Dorsolateral prefrontal cortex (tissue), 120 donors: ENCODE measurements at regions of chr1 and their contacts with region 1.

Region 1: DNA sequence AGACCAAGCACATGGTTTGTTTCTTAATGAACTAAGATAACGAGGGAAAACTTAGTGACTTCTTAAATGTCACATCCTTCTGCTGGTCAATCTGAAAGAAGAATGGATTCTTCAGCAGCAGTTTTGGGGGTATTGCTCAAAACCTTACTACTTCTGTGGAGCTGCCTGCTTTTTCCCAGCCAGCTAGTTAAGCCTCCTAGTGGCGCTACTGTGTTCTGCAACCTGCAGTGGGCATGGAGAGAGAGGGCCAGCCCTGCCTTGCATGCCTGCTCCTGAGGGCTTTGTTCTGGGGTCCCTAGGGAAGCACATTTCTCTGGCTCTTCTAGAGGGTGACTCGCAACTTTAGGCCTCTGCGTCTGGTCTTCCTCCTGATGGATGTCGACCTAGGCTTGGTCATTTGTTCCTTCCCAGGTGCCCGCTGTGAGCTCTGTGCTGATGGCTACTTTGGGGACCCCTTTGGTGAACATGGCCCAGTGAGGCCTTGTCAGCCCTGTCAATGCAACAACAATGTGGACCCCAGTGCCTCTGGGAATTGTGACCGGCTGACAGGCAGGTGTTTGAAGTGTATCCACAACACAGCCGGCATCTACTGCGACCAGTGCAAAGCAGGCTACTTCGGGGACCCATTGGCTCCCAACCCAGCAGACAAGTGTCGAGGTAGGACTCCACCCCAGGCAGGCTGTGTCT is 42.0 kb downstream of the LAMC2 start:
- DNase-seq: no peak
- H3K4me3 ChIP-seq: no peak overlapping the region
- H3K27ac ChIP-seq: no peak overlapping the region
- H3K27me3 ChIP-seq: no peaks in the 10 kb centered on the region
- CTCF ChIP-seq: peak in 52 of 56 donors; percentile 32 to 66 (median 50)

Region 2: DNA sequence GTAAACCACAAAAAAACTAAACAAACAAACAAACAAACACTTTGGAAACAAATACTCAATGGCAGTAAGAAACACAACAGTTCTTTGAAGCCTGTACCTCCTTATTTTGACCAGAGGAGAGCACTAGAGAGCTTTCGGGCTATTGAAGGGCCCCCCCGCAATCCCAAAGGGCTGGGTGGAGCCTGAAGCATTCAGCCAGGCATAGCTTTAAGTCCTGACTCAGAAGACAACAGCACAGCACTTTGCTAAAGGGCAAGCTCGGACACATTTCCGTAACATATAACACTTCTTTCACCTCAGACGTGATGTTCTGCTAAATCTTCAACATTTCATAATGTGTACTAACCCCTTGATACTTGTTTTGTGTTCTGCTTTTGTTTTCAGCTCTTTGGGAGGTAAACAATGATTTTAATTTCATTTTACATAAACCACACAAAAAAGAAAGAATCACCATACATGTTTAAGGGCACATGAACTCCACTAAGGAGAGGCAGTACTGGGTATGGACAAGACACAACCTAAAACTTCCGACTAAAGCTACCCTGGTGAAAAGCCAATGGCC is 265.5 kb before region 1 on chr1:
- intact Hi-C with region 1: loop called in 1 of 2 experiments (anchors 5 kb)
- DNase-seq: peak in 7 of 10 donors; percentile 34 to 67 (median 61)
- H3K4me3 ChIP-seq: peak overlapping the region in 29 of 59 donors; percentile 3 to 45 (median 17)
- H3K27ac ChIP-seq: peak overlapping the region in 1 of 59 donors; percentile 5
- H3K27me3 ChIP-seq: no peaks in the 10 kb centered on the region
- CTCF ChIP-seq: peak in 55 of 56 donors; percentile 42 to 94 (median 84)

Region 3: DNA sequence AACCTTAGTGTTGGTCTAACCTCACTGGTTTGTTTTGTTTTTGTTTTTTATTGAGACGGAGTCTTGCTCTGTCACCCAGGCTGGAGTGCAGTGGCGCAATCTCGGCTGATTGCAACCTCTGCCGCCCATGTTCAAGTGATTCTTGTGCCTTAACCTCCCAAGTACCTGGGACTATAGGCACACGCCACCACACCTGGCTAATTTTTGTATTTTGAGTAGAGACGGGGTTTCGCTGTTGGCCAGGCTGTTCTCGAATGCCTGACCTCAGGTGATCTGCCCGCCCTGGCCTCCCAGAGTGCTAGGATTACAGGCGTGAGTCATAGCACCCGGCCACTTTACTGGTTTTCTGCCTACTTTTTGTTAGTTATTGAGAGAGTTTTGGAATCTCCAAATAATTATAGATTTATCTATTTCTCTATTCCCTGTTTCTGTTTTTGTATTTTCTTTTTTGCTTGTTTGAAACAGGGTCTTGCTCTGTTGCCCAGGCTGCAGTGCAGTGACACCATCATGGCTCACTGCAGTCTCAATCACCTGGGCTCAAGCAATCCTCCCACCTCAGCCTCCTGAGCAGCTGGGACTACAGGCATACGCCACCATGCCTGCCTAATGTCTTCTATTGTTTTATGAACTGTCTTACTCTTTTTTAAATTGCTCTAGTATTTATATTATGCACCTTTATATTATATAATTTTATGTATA is 265.6 kb after region 1 on chr1:
- intact Hi-C with region 1: no loop called
- DNase-seq: no peak
- H3K4me3 ChIP-seq: no peak overlapping the region
- H3K27ac ChIP-seq: no peak overlapping the region
- H3K27me3 ChIP-seq: no peaks in the 10 kb centered on the region
- CTCF ChIP-seq: no peak

Region 4: GRCh38 chr1:183593356-183593755 is 365.2 kb after region 1 on chr1:
- intact Hi-C with region 1: no loop called
- DNase-seq: no peak
- H3K4me3 ChIP-seq: peak overlapping the region in 1 of 59 donors; percentile 17
- H3K27ac ChIP-seq: peak overlapping the region in 54 of 59 donors; percentile 5 to 89 (median 62)
- H3K27me3 ChIP-seq: no peaks in the 10 kb centered on the region
- CTCF ChIP-seq: no peak